HEK293 (cell line): ENCODE measurements at regions of chr11 and their contacts with region 1.

Region 1: DNA sequence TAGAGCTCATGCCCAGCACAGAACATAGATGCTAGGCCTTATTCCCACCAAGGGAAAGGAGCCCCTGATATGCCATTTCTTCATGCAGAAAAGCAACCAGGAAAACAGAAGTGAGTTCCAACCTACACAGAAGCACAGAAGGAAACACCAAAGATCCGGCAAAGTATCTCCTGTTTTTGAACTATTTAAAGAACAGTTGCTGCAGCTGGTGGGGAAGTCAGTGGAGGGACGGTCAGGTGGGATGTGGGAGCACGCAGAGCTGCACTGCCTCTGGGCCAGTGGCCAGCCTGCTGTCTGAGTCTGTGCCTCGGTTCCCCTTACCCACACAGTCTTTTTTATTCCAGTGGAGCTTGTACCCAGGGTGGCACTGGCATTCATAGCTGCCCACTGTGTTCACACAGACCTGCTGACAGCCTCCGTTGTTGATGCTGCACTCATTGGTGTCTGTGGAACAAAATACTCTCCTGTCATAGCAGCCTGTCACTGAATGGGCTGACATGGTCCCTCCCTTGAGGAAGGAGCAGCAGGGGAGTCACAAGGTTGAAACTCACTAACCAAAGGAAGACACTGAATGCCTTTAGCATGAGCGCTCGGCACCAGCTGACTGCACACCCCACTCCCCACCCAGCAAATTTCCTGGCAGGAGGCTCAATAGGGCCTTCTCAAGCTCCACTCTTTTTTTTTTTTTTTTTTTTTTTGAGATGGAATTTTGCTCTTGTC is 37.9 kb downstream of the SCUBE2 start:
- H3K4me3 ChIP-seq: no peak overlapping the region
- H3K27ac ChIP-seq: no peak overlapping the region
- H3K4me1 ChIP-seq: no peaks in the 10 kb centered on the region
- CTCF ChIP-seq: no peak

Region 2: GRCh38 chr11:9091044-9091936 is 37.8 kb after region 1 on chr11 and contains the start of gene SCUBE2:
- CTCF ChIA-PET with region 1: no interaction called
- POLR2A ChIA-PET with region 1: interaction called, 12 read pairs
- H3K4me3 ChIP-seq: peak within 1 kb of the TSS; percentile 25
- H3K27ac ChIP-seq: no peak within 1 kb of the TSS
- H3K4me1 ChIP-seq: no peaks in the 10 kb centered on the region
- CTCF ChIP-seq: no peak